ENCODE measurements at regions of chr2 and their contacts with region 1.

Region 1: GRCh38 chr2:61993444-61994024 is 88.1 kb downstream of the COMMD1 start:
- DNase-seq: peak; percentile 26 to 68 (median 41)
- ATAC-seq: peak; percentile 87
- H3K4me3 ChIP-seq: no peak overlapping the region
- H3K27ac ChIP-seq: no peak overlapping the region
- H3K4me1 ChIP-seq: peaks cover 0 to 12% of the 10 kb centered on the region in 2 experiments; a peak in 3 of 5 replicates
- H3K27me3 ChIP-seq: no peaks in the 10 kb centered on the region
- CTCF ChIP-seq: peak; percentile 55 to 91 (median 71); a peak in 5 of 6 replicates
- EP300 ChIP-seq: no peak
- POLR2A ChIP-seq: no peak
- RAD21 ChIP-seq: peak; percentile 91 to 94

Region 2: GRCh38 chr2:61529944-61530735 is 463.4 kb before region 1 on chr2:
- CTCF ChIA-PET with region 1: no interaction called
- POLR2A ChIA-PET with region 1: no interaction called
- in situ Hi-C with region 1: no loop called
- intact Hi-C with region 1: no loop called
- DNase-seq: no peak
- ATAC-seq: peak; percentile 15
- H3K4me3 ChIP-seq: no peak overlapping the region
- H3K27ac ChIP-seq: no peak overlapping the region
- H3K4me1 ChIP-seq: peaks cover 13 to 22% of the 10 kb centered on the region in 2 experiments; a peak in 3 of 5 replicates
- H3K27me3 ChIP-seq: no peaks in the 10 kb centered on the region
- CTCF ChIP-seq: no peak
- EP300 ChIP-seq: no peak
- POLR2A ChIP-seq: no peak
- RAD21 ChIP-seq: no peak

Region 3: GRCh38 chr2:62175728-62176127 is 182.2 kb after region 1 on chr2:
- CTCF ChIA-PET with region 1: no interaction called
- POLR2A ChIA-PET with region 1: no interaction called
- in situ Hi-C with region 1: no loop called
- intact Hi-C with region 1: no loop called
- DNase-seq: no peak
- ATAC-seq: no peak
- H3K4me3 ChIP-seq: no peak overlapping the region
- H3K27ac ChIP-seq: no peak overlapping the region
- H3K4me1 ChIP-seq: peaks cover 7 to 21% of the 10 kb centered on the region in 2 experiments; a peak in 3 of 5 replicates
- H3K27me3 ChIP-seq: no peaks in the 10 kb centered on the region
- CTCF ChIP-seq: no peak
- EP300 ChIP-seq: no peak
- POLR2A ChIP-seq: no peak
- RAD21 ChIP-seq: no peak

Region 4: GRCh38 chr2:62216616-62217015 is 223.1 kb after region 1 on chr2:
- CTCF ChIA-PET with region 1: no interaction called
- POLR2A ChIA-PET with region 1: no interaction called
- in situ Hi-C with region 1: no loop called
- intact Hi-C with region 1: loop called (anchors 10 kb)
- DNase-seq: peak in 1 of 4 experiments; percentile 26
- ATAC-seq: no peak
- H3K4me3 ChIP-seq: no peak overlapping the region
- H3K27ac ChIP-seq: no peak overlapping the region
- H3K4me1 ChIP-seq: peaks cover 16 to 42% of the 10 kb centered on the region in 2 experiments
- H3K27me3 ChIP-seq: no peaks in the 10 kb centered on the region
- CTCF ChIP-seq: no peak
- EP300 ChIP-seq: no peak
- POLR2A ChIP-seq: no peak
- RAD21 ChIP-seq: no peak

Region 5: DNA sequence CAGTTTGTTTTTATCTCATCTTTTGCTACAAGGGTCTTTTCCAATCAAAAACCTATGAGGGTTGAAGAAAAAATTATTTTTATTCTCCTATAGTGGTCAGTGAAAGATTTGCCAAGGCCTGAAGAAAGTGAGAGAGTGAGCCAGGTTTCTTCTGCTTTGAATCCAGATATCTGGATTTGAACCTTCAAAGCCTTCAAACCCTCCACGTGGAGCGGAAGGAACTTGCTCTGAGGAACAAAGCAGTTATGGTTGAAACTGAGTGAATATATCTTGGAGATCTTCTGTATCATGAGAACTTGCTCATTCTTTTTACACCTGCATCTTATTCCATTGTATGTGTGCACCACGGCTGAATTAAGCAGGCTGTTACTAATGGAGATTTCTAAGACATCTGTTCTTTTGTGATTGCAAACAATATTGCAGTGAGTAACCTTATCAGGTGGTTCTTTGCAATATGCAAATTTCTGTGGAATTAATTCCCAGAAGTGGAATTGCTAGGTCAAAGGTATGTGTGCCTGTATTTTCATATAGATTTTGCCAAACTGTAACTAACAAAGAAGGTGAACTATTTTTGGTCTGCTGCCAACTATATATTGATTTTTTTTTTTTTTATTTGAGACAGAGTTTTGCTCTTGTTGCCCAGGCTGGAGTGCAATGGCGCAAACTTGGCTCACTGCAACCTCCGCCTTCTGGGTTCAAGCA is 350.3 kb after region 1 on chr2:
- CTCF ChIA-PET with region 1: no interaction called
- POLR2A ChIA-PET with region 1: no interaction called
- in situ Hi-C with region 1: no loop called
- intact Hi-C with region 1: loop called (anchors 1 kb)
- DNase-seq: peak in 1 of 4 experiments; percentile 43
- ATAC-seq: peak; percentile 46
- H3K4me3 ChIP-seq: no peak overlapping the region
- H3K27ac ChIP-seq: peak overlapping the region; percentile 65
- H3K4me1 ChIP-seq: peaks cover 14 to 15% of the 10 kb centered on the region in 2 experiments
- H3K27me3 ChIP-seq: no peaks in the 10 kb centered on the region
- CTCF ChIP-seq: no peak
- EP300 ChIP-seq: no peak
- POLR2A ChIP-seq: no peak
- RAD21 ChIP-seq: no peak

Measured in K562 (cell line).